MCF 10A (cell line): ENCODE measurements at regions of chr10 and their contacts with region 1.

Region 1: GRCh38 chr10:109773288-109774120 is 149.8 kb downstream of the XPNPEP1 start:
- DNase-seq: peak; percentile 55
- H3K4me3 Mint-ChIP-seq: no peak overlapping the region
- H3K27ac Mint-ChIP-seq: no peak overlapping the region
- H3K4me1 Mint-ChIP-seq: no peaks in the 10 kb centered on the region
- H3K27me3 Mint-ChIP-seq: no peaks in the 10 kb centered on the region
- CTCF ChIP-seq: peak; percentile 77

Region 2: DNA sequence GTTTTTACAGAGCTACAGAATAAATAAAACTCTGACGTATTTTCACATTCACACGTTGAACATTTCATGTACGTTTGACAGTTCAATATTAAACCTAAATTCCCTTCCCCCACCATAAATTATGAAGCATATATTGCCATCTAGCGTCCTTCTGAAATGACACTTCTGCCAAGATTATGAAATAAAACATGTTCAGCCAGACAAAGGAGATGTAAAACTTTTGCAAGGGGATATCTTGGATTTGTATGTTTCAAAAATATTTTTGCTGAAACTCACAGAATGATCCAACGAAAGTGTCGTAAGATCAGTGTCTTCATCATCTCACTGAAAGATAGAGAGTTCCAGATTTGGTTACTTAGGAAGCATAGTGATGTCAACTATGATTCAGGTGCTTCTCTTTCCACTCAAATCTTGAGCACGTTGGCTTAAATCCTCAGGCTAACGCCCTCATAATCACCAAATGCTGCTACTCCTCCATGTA is 754.5 kb before region 1 on chr10:
- CTCF ChIA-PET with region 1: interaction called, 5 read pairs
- POLR2A ChIA-PET with region 1: no interaction called
- intact Hi-C with region 1: loop called (anchors 10 kb)
- DNase-seq: peak; percentile 13
- H3K4me3 Mint-ChIP-seq: no peak overlapping the region
- H3K27ac Mint-ChIP-seq: no peak overlapping the region
- H3K4me1 Mint-ChIP-seq: peaks cover 8% of the 10 kb centered on the region
- H3K27me3 Mint-ChIP-seq: no peaks in the 10 kb centered on the region
- CTCF ChIP-seq: peak; percentile 36

Region 3: DNA sequence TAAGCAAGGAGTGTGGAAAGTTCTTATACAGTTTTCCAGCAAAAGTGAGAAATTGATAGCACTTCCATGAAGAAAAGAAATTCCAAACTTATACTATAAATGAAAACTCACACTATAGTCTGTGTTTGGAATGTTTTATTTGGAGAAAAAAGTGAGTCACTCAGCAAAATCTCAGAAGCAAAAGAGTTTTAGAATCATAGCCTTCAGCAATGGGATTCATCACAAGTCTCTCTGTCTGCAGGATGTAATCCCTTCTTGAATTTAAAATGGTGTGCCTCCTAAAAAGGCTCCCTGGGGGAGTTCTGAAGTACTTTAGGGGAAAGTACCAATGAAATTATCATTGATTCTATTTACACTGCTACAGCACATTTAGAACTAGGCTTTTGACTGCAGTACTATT is 606.6 kb before region 1 on chr10:
- CTCF ChIA-PET with region 1: no interaction called
- POLR2A ChIA-PET with region 1: no interaction called
- intact Hi-C with region 1: loop called (anchors 10 kb)
- DNase-seq: no peak
- H3K4me3 Mint-ChIP-seq: no peak overlapping the region
- H3K27ac Mint-ChIP-seq: no peak overlapping the region
- H3K4me1 Mint-ChIP-seq: peaks cover 13% of the 10 kb centered on the region
- H3K27me3 Mint-ChIP-seq: no peaks in the 10 kb centered on the region
- CTCF ChIP-seq: no peak

Region 4: DNA sequence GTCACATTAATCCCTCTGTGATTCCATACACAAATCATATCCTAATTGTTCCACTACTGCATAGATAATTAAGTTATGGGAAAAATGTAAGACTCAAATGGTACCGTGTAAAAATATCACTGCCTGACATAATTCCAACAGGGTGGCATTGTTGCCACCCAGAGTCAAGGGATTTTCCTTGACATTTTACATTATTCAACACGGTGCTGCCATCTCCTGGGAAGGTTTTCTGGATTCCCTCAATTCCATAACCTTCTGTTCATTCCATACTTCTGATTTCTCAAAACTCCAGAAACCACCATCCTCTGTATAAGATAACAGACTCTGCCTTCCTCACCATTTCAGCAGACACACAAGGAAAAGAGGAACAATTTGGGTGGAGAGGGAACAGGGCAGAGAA is 346.1 kb before region 1 on chr10:
- CTCF ChIA-PET with region 1: no interaction called
- POLR2A ChIA-PET with region 1: no interaction called
- intact Hi-C with region 1: loop called (anchors 10 kb)
- DNase-seq: no peak
- H3K4me3 Mint-ChIP-seq: no peak overlapping the region
- H3K27ac Mint-ChIP-seq: no peak overlapping the region
- H3K4me1 Mint-ChIP-seq: no peaks in the 10 kb centered on the region
- H3K27me3 Mint-ChIP-seq: no peaks in the 10 kb centered on the region
- CTCF ChIP-seq: no peak

Region 5: GRCh38 chr10:109726473-109726872 is 47.0 kb before region 1 on chr10:
- CTCF ChIA-PET with region 1: no interaction called
- POLR2A ChIA-PET with region 1: no interaction called
- intact Hi-C with region 1: no loop called
- DNase-seq: no peak
- H3K4me3 Mint-ChIP-seq: no peak overlapping the region
- H3K27ac Mint-ChIP-seq: no peak overlapping the region
- H3K4me1 Mint-ChIP-seq: no peaks in the 10 kb centered on the region
- H3K27me3 Mint-ChIP-seq: no peaks in the 10 kb centered on the region
- CTCF ChIP-seq: no peak

Region 6: GRCh38 chr10:109762555-109762954 is 10.9 kb before region 1 on chr10:
- CTCF ChIA-PET with region 1: interaction called, 16 read pairs
- POLR2A ChIA-PET with region 1: no interaction called
- intact Hi-C with region 1: no loop called
- DNase-seq: no peak
- H3K4me3 Mint-ChIP-seq: no peak overlapping the region
- H3K27ac Mint-ChIP-seq: no peak overlapping the region
- H3K4me1 Mint-ChIP-seq: no peaks in the 10 kb centered on the region
- H3K27me3 Mint-ChIP-seq: no peaks in the 10 kb centered on the region
- CTCF ChIP-seq: no peak

Region 7: GRCh38 chr10:109784236-109784635 is 10.7 kb after region 1 on chr10:
- CTCF ChIA-PET with region 1: interaction called, 16 read pairs
- POLR2A ChIA-PET with region 1: no interaction called
- intact Hi-C with region 1: no loop called
- DNase-seq: peak; percentile 26
- H3K4me3 Mint-ChIP-seq: no peak overlapping the region
- H3K27ac Mint-ChIP-seq: no peak overlapping the region
- H3K4me1 Mint-ChIP-seq: peaks cover 7% of the 10 kb centered on the region
- H3K27me3 Mint-ChIP-seq: no peaks in the 10 kb centered on the region
- CTCF ChIP-seq: no peak

Region 8: GRCh38 chr10:109852475-109853037 is 79.1 kb after region 1 on chr10:
- CTCF ChIA-PET with region 1: interaction called, 10 read pairs
- POLR2A ChIA-PET with region 1: no interaction called
- intact Hi-C with region 1: no loop called
- DNase-seq: peak; percentile 82
- H3K4me3 Mint-ChIP-seq: no peak overlapping the region
- H3K27ac Mint-ChIP-seq: no peak overlapping the region
- H3K4me1 Mint-ChIP-seq: peaks cover 9% of the 10 kb centered on the region
- H3K27me3 Mint-ChIP-seq: no peaks in the 10 kb centered on the region
- CTCF ChIP-seq: peak; percentile 96

Region 9: DNA sequence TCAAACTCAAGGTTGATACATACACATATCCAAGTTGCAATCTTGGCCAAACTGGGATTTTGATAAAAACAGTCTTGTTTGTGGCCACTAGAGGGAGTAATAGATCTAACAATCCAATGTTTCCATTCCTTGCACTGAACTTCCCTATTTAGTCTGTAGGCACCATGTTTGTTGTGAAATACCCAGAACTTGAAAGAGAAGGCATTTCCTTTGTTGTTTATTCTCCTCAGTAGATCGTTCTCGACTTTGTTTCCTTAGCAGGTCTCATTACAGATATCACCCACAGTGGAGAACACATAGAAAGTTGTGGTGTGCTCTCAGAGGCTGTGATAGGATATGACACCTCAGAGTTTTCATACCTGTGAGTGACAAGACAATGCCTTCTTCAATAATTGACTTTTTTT is 363.6 kb after region 1 on chr10:
- CTCF ChIA-PET with region 1: no interaction called
- POLR2A ChIA-PET with region 1: no interaction called
- intact Hi-C with region 1: no loop called
- DNase-seq: peak; percentile 74
- H3K4me3 Mint-ChIP-seq: no peak overlapping the region
- H3K27ac Mint-ChIP-seq: peak overlapping the region; percentile 58
- H3K4me1 Mint-ChIP-seq: peaks cover 14% of the 10 kb centered on the region
- H3K27me3 Mint-ChIP-seq: no peaks in the 10 kb centered on the region
- CTCF ChIP-seq: peak; percentile 64